ENCODE measurements at regions of chr15 and their contacts with region 1.

Region 1: DNA sequence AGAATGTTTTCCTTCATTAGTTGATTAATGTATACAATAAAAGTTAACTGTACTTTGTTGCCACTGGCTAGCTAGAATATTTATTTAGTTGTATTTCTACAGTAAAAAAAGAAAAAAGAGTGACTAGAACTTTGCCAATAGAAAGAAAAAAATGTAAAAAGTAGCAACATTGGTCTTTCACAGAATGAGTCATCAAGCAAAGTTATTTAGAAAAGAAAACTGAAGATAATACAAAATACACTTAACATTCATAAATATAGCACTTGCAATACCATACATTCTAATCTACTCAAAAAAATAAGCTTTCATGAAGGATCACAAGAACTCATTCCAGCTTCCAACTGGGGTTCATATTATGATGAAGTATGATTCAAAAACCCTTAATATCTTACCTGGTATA is 83.4 kb downstream of the AQR start:
- DNase-seq: no peak
- ATAC-seq: no peak
- H3K4me3 ChIP-seq: no peak overlapping the region
- H3K27ac ChIP-seq: no peak overlapping the region
- H3K4me1 ChIP-seq: no peaks in the 10 kb centered on the region
- H3K27me3 ChIP-seq: no peaks in the 10 kb centered on the region
- CTCF ChIP-seq: no peak

Region 2: GRCh38 chr15:34904527-34904926 is 18.4 kb after region 1 on chr15:
- CTCF ChIA-PET with region 1: no interaction called
- POLR2A ChIA-PET with region 1: no interaction called
- in situ Hi-C with region 1: no loop called
- intact Hi-C with region 1: loop called (anchors 2 kb)
- DNase-seq: no peak
- ATAC-seq: no peak
- H3K4me3 ChIP-seq: no peak overlapping the region
- H3K27ac ChIP-seq: no peak overlapping the region
- H3K4me1 ChIP-seq: no peaks in the 10 kb centered on the region
- H3K27me3 ChIP-seq: no peaks in the 10 kb centered on the region
- CTCF ChIP-seq: no peak

Measured in Panc1 (cell line).